CD8-positive, alpha-beta T cell (primary cell): ENCODE measurements at regions of chr2 and their contacts with region 1.

Region 1: GRCh38 chr2:105775809-105776559 is 31.3 kb downstream of the NCK2 start:
- DNase-seq: peak in 4 of 9 experiments; percentile 52 to 82 (median 62)
- ATAC-seq: peak; percentile 59
- H3K4me3 ChIP-seq: peak overlapping the region; percentile 20 to 49
- H3K4me3 Mint-ChIP-seq: peak overlapping the region; percentile 80
- H3K27ac ChIP-seq: peak overlapping the region; percentile 64 to 83
- H3K27ac Mint-ChIP-seq: peak overlapping the region; percentile 96
- H3K4me1 ChIP-seq: peaks cover 98% of the 10 kb centered on the region
- H3K4me1 Mint-ChIP-seq: peaks cover 94% of the 10 kb centered on the region
- H3K27me3 ChIP-seq: no peaks in the 10 kb centered on the region
- H3K27me3 Mint-ChIP-seq: no peaks in the 10 kb centered on the region
- CTCF ChIP-seq: no peak

Region 2: DNA sequence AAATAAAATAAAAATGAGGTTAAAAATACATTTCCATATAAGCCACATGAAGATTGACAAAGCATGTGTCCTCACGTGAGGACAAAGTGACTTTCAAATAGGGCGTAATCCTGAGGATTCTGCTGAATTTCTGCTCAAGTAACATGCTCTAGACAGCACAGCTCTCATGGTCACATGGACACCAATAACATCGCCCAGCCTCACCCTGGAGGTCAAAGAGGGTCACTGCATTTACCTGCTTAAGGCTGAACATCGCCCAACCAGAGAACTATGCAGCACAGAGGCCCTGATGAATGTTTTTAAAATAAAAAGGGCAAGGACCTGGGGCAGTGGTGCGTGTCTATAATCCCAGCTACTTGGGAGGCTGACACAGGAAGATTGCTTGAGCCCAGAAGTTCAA is 476.7 kb before region 1 on chr2:
- CTCF ChIA-PET with region 1: no interaction called
- POLR2A ChIA-PET with region 1: no interaction called
- intact Hi-C with region 1: no loop called
- DNase-seq: no peak
- ATAC-seq: no peak
- H3K4me3 ChIP-seq: no peak overlapping the region
- H3K4me3 Mint-ChIP-seq: no peak overlapping the region
- H3K27ac ChIP-seq: no peak overlapping the region
- H3K27ac Mint-ChIP-seq: no peak overlapping the region
- H3K4me1 ChIP-seq: peaks cover 5% of the 10 kb centered on the region
- H3K4me1 Mint-ChIP-seq: peaks cover 26% of the 10 kb centered on the region
- H3K27me3 ChIP-seq: no peaks in the 10 kb centered on the region
- H3K27me3 Mint-ChIP-seq: no peaks in the 10 kb centered on the region
- CTCF ChIP-seq: no peak

Region 3: DNA sequence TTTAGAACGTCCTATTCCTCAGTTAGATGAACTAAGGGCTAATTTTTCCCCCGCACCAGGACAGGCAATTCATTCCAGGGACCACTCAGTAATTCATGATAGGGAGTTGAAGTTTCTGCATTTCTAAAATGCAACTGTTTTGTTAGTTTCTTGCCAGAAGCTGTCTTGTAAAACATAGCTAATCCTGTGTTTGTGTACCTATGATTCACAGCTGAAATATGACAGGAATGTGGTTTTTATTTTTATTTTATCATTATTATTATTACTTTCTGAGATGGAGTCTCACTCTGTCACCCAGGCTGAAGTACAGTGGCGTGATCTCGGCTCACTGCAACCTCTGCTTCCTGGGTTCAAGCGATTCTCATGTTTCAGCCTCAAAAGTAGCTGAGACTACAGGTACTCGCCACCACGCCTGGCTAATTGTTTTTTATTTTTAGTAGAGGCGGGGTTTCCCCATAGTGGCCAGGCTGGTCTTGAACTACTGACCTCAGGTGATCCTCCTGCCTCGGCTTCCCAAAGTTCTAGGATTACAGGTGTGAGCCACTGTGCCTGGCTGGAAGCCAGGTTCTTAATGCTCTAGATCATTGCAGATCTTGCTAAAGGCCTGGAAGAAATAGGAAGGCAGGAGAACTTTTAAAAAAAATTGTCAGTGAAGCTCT is 222.3 kb before region 1 on chr2:
- CTCF ChIA-PET with region 1: no interaction called
- POLR2A ChIA-PET with region 1: no interaction called
- intact Hi-C with region 1: no loop called
- DNase-seq: no peak
- ATAC-seq: no peak
- H3K4me3 ChIP-seq: no peak overlapping the region
- H3K4me3 Mint-ChIP-seq: no peak overlapping the region
- H3K27ac ChIP-seq: no peak overlapping the region
- H3K27ac Mint-ChIP-seq: no peak overlapping the region
- H3K4me1 ChIP-seq: no peaks in the 10 kb centered on the region
- H3K4me1 Mint-ChIP-seq: no peaks in the 10 kb centered on the region
- H3K27me3 ChIP-seq: no peaks in the 10 kb centered on the region
- H3K27me3 Mint-ChIP-seq: peaks cover 2% of the 10 kb centered on the region
- CTCF ChIP-seq: no peak

Region 4: DNA sequence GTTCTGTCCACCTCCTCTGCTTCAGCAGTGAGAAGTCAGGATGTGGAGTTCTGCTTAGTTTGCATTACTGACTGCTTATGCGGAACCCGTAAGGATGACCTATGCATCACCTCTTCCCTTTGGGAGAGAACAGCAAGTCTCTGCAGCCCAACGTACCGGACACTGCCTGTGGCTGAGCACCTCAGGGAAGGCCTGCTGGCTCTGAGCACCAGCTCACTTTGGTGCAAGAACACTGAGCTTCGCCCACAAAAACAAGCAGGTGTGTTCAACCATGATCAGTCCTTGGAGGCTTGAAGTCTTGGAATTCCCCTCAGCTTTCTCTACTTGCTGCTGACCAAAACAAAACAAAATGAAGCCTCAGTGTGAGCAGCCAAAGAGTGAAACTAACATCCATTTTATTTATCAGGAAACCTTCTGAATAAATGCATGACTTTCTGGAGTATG is 84.0 kb before region 1 on chr2:
- CTCF ChIA-PET with region 1: no interaction called
- POLR2A ChIA-PET with region 1: no interaction called
- intact Hi-C with region 1: no loop called
- DNase-seq: no peak
- ATAC-seq: no peak
- H3K4me3 ChIP-seq: no peak overlapping the region
- H3K4me3 Mint-ChIP-seq: no peak overlapping the region
- H3K27ac ChIP-seq: no peak overlapping the region
- H3K27ac Mint-ChIP-seq: no peak overlapping the region
- H3K4me1 ChIP-seq: no peaks in the 10 kb centered on the region
- H3K4me1 Mint-ChIP-seq: no peaks in the 10 kb centered on the region
- H3K27me3 ChIP-seq: no peaks in the 10 kb centered on the region
- H3K27me3 Mint-ChIP-seq: no peaks in the 10 kb centered on the region
- CTCF ChIP-seq: no peak

Region 5: GRCh38 chr2:105749583-105750400 is 26.2 kb before region 1 on chr2:
- CTCF ChIA-PET with region 1: interaction called, 13 read pairs
- POLR2A ChIA-PET with region 1: interaction called, 24 read pairs
- intact Hi-C with region 1: loop called in 1 of 2 experiments (anchors 2 kb)
- DNase-seq: peak in 6 of 9 experiments; percentile 42 to 54 (median 48)
- ATAC-seq: no peak
- H3K4me3 ChIP-seq: peak overlapping the region; percentile 25 to 34
- H3K4me3 Mint-ChIP-seq: peak overlapping the region; percentile 92
- H3K27ac ChIP-seq: peak overlapping the region; percentile 70 to 80
- H3K27ac Mint-ChIP-seq: peak overlapping the region; percentile 97
- H3K4me1 ChIP-seq: peaks cover 78% of the 10 kb centered on the region
- H3K4me1 Mint-ChIP-seq: peaks cover 84% of the 10 kb centered on the region
- H3K27me3 ChIP-seq: no peaks in the 10 kb centered on the region
- H3K27me3 Mint-ChIP-seq: no peaks in the 10 kb centered on the region
- CTCF ChIP-seq: no peak

Region 6: DNA sequence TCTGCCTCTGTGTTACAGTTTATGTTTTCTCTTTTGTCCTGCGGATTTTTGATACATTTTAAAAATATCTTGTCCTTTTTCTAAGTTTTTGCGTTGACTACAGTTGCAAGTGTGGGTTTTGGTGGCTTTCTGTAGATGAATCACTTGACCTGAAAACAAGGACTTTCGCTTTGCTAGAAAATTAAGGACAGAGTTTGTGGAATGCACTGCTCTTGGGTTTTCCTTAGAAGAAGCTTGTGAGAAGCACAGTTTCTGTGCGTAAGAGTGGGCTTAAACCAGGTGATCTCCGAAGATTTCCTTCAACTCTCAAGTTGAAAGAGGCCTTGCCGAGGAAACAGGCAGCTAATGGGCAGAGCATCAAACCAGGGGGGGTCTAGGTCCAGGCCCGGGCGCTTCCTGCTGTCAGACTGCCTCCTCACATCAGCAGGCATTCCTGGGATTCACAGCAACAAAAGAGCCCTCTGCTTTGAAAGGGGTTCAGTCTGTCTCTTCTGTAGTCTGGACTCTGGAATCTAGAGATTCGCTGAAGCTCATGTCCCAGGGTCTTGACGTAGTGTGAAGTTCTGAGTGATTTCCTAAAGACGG is 14.0 kb before region 1 on chr2:
- CTCF ChIA-PET with region 1: interaction called, 5 read pairs
- POLR2A ChIA-PET with region 1: interaction called, 4 read pairs
- intact Hi-C with region 1: loop called in 1 of 2 experiments (anchors 2 kb)
- DNase-seq: peak in 1 of 9 experiments; percentile 35
- ATAC-seq: no peak
- H3K4me3 ChIP-seq: peak overlapping the region in 1 of 2 experiments; percentile 9
- H3K4me3 Mint-ChIP-seq: peak overlapping the region; percentile 64
- H3K27ac ChIP-seq: peak overlapping the region in 1 of 2 experiments; percentile 71
- H3K27ac Mint-ChIP-seq: peak overlapping the region; percentile 93
- H3K4me1 ChIP-seq: peaks cover 95% of the 10 kb centered on the region
- H3K4me1 Mint-ChIP-seq: peaks cover 97% of the 10 kb centered on the region
- H3K27me3 ChIP-seq: no peaks in the 10 kb centered on the region
- H3K27me3 Mint-ChIP-seq: no peaks in the 10 kb centered on the region
- CTCF ChIP-seq: no peak

Region 7: GRCh38 chr2:105789745-105790460 is 13.9 kb after region 1 on chr2:
- CTCF ChIA-PET with region 1: interaction called, 10 read pairs
- POLR2A ChIA-PET with region 1: interaction called, 4 read pairs
- intact Hi-C with region 1: no loop called
- DNase-seq: peak in 5 of 9 experiments; percentile 56 to 84 (median 70)
- ATAC-seq: peak; percentile 83
- H3K4me3 ChIP-seq: no peak overlapping the region
- H3K4me3 Mint-ChIP-seq: peak overlapping the region; percentile 62
- H3K27ac ChIP-seq: peak overlapping the region; percentile 8 to 86
- H3K27ac Mint-ChIP-seq: peak overlapping the region; percentile 94
- H3K4me1 ChIP-seq: peaks cover 91% of the 10 kb centered on the region
- H3K4me1 Mint-ChIP-seq: peaks cover 93% of the 10 kb centered on the region
- H3K27me3 ChIP-seq: no peaks in the 10 kb centered on the region
- H3K27me3 Mint-ChIP-seq: no peaks in the 10 kb centered on the region
- CTCF ChIP-seq: peak; percentile 39